AG04450 (cell line): ENCODE measurements at regions of chr17 and their contacts with region 1.

Region 1: GRCh38 chr17:29617125-29617480 is 5.6 kb downstream of the CORO6 start:
- DNase-seq: no peak
- H3K4me3 ChIP-seq: no peak overlapping the region
- H3K27ac ChIP-seq: no peak overlapping the region
- H3K27me3 ChIP-seq: no peaks in the 10 kb centered on the region
- CTCF ChIP-seq: peak; percentile 65

Region 2: DNA sequence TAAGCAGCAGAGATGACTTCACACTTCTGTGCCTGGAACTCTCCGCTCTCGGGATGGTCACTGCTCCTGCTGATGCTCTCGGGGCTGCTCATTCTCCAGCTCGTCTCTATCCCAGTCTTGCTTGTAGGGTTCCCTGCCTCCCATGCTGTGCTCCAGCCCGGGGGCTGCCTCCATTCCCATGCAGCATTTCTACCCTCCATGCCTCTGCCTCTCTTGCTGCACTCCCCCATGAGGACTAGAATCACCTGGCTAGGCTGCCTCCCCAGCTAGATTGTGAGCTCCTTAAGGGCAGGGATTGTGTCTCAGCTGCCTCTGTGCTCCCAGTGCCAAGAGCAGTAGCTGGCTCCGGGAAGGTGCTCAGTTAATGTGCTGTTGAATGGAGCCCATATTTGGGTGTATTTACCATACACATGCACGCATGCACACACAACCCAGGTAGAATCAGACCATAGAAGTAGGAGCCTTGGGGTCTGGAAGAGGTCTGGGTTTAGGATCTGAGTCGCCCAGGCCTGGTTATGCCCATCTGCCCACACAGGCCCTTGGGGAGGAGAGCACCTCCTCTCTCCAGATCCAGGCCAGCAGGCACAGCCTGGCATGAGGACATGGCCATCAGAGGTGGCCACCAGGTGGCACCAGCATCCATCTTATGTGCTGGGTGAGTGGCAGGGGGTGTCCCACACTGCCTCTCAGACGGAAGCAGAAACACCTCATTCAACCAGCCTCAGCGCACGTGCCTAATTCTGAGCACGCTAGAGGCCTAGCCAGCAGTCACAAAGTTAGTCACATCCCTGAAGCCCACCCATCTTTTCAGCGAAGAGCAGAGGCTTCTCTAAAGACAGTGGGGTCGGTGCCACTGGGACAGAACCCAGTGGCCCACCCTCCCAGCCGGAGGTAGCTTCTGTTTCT is 37.0 kb before region 1 on chr17:
- CTCF ChIA-PET with region 1: interaction called, 21 read pairs
- POLR2A ChIA-PET with region 1: interaction called, 4 read pairs
- DNase-seq: no peak
- H3K4me3 ChIP-seq: no peak overlapping the region
- H3K27ac ChIP-seq: no peak overlapping the region
- H3K27me3 ChIP-seq: no peaks in the 10 kb centered on the region
- CTCF ChIP-seq: peak; percentile 79

Region 3: GRCh38 chr17:29591737-29592624 is 25.1 kb before region 1 on chr17:
- CTCF ChIA-PET with region 1: interaction called, 14 read pairs
- POLR2A ChIA-PET with region 1: interaction called, 8 read pairs
- DNase-seq: no peak
- H3K4me3 ChIP-seq: peak overlapping the region; percentile 44
- H3K27ac ChIP-seq: peak overlapping the region; percentile 65
- H3K27me3 ChIP-seq: no peaks in the 10 kb centered on the region
- CTCF ChIP-seq: peak; percentile 98

Region 4: DNA sequence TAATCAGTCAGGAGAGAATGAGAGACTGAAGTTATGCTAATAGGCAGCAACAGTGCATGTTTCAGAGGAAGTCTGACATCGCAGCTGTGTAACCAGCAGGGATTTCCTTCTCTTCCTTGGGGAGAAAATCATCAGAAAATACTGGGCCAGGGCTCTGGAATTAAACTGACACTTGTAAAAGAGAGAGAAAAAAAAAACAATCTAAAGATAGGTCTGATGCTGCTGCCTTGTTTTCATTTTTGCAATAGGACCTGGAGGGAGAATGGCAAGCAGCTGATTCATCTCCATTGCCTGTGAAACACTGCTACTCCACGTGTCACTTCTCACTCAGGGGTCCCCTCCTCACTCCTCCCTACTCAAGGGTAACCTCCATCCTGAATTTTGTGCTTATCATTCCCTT is 23.3 kb after region 1 on chr17:
- CTCF ChIA-PET with region 1: interaction called, 12 read pairs
- POLR2A ChIA-PET with region 1: interaction called, 3 read pairs
- DNase-seq: peak; percentile 27
- H3K4me3 ChIP-seq: no peak overlapping the region
- H3K27ac ChIP-seq: peak overlapping the region; percentile 68
- H3K27me3 ChIP-seq: no peaks in the 10 kb centered on the region
- CTCF ChIP-seq: no peak

Region 5: GRCh38 chr17:29645515-29646051 is 28.5 kb after region 1 on chr17:
- CTCF ChIA-PET with region 1: interaction called, 11 read pairs
- POLR2A ChIA-PET with region 1: interaction called, 3 read pairs
- DNase-seq: peak; percentile 30
- H3K4me3 ChIP-seq: no peak overlapping the region
- H3K27ac ChIP-seq: peak overlapping the region; percentile 71
- H3K27me3 ChIP-seq: no peaks in the 10 kb centered on the region
- CTCF ChIP-seq: no peak